Common myeloid progenitor, CD34-positive (primary cell): ENCODE measurements at regions of chr14 and their contacts with region 1.

Region 1: GRCh38 chr14:100192672-100193416 is 33.4 kb upstream of the DEGS2 start:
- DNase-seq: peak; percentile 98 to 99 (median 99)
- H3K4me3 ChIP-seq: peak overlapping the region in 6 of 7 experiments; percentile 25 to 70 (median 52)
- H3K27ac ChIP-seq: peak overlapping the region; percentile 54 to 77
- H3K4me1 ChIP-seq: peaks cover 0 to 18% (median 14%) of the 10 kb centered on the region in 4 experiments
- H3K27me3 ChIP-seq: no peaks in the 10 kb centered on the region

Region 2: GRCh38 chr14:100067971-100068959 is 124.6 kb before region 1 on chr14:
- CTCF ChIA-PET with region 1: interaction called, 25 read pairs
- POLR2A ChIA-PET with region 1: no interaction called
- DNase-seq: peak; percentile 93 to 99 (median 98)
- H3K4me3 ChIP-seq: peak overlapping the region in 5 of 7 experiments; percentile 9 to 64 (median 44)
- H3K27ac ChIP-seq: peak overlapping the region; percentile 82 to 92
- H3K4me1 ChIP-seq: peaks cover 50 to 100% (median 98%) of the 10 kb centered on the region in 4 experiments
- H3K27me3 ChIP-seq: no peaks in the 10 kb centered on the region

Region 3: DNA sequence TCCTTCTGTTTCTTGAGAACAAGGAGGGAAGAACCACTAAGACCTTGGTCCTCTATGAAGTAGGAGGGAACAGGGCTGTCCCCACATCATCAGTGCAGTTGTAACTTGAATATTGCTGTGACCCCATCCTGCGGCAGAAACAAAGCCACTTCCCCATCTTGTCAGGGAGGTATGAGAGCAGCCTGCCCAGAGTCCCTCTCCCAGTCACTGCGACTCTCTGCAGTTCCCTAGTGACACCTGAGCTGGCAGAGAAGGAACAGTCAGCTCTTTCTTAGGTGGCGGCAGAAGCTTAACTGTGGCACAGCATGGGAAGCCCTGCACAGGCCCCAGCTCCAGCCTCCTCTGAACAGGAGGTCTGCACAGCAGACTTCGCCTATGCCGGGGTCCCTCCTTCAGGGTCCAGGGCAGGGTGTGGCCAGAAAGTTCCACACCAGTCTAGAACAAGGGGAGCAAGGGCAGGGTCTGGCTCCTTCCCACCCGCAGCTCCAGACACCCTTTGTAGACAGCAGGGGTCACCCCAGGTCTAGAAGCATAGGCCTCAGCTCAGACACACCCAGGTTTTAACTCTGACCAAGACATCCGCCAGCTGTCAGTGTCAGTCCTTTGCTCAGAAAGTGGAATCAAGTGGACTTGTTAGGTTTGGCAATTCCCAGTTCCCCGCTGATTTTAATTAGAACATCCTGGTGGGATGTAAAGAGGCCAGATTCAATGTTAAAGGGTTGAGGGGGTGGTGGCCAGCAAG is 70.2 kb before region 1 on chr14:
- CTCF ChIA-PET with region 1: interaction called, 61 read pairs
- POLR2A ChIA-PET with region 1: no interaction called
- DNase-seq: peak in 2 of 3 donors; percentile 30 to 35
- H3K4me3 ChIP-seq: no peak overlapping the region
- H3K27ac ChIP-seq: no peak overlapping the region
- H3K4me1 ChIP-seq: peaks cover 0 to 7% (median 2%) of the 10 kb centered on the region in 4 experiments
- H3K27me3 ChIP-seq: no peaks in the 10 kb centered on the region

Region 4: GRCh38 chr14:100147181-100147631 is 45.6 kb before region 1 on chr14:
- CTCF ChIA-PET with region 1: interaction called, 39 read pairs
- POLR2A ChIA-PET with region 1: interaction called, 8 read pairs
- DNase-seq: peak; percentile 42 to 83 (median 82)
- H3K4me3 ChIP-seq: peak overlapping the region in 2 of 7 experiments; percentile 32 to 58
- H3K27ac ChIP-seq: no peak overlapping the region
- H3K4me1 ChIP-seq: peaks cover 0 to 35% (median 32%) of the 10 kb centered on the region in 4 experiments
- H3K27me3 ChIP-seq: no peaks in the 10 kb centered on the region

Region 5: DNA sequence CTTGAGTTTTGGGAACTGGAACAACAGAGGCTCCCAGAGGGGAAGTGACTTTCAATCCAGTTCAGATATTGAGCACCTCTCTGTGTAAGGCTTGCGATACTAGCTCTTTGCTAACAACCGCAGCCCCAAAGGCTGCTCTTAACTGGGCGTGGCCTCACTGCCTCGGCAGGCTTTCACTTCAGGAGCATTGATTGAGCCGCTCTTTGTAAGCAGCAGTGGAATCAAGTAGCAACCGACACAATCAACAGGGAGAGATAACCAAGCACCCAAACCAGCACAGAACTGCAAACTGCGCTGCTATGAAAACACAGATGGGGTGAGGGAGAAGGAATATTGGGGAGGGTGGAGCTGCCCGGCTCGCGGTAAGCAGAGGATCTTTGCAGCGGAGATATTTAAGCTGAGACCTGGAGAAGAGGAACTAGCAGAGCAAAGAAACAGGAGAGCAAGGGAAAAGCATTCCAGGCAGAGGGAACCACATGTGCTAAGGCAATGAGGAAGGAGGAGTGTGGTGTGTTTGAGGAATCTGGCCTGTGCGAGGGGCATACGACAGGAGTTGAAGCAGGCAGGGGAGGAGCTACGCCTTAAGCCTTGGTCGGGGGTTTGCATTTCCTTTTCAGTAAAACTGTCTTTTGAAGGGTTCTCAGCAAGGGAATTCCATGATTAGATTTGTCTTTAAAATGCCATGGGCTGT is 28.8 kb after region 1 on chr14:
- CTCF ChIA-PET with region 1: interaction called, 20 read pairs
- POLR2A ChIA-PET with region 1: interaction called, 3 read pairs
- DNase-seq: peak; percentile 52 to 82 (median 76)
- H3K4me3 ChIP-seq: peak overlapping the region; percentile 48 to 87 (median 70)
- H3K27ac ChIP-seq: peak overlapping the region in 1 of 2 experiments; percentile 68
- H3K4me1 ChIP-seq: peaks cover 24 to 46% (median 43%) of the 10 kb centered on the region in 4 experiments
- H3K27me3 ChIP-seq: no peaks in the 10 kb centered on the region

Region 6: GRCh38 chr14:100278702-100279101 is 85.9 kb after region 1 on chr14:
- CTCF ChIA-PET with region 1: no interaction called
- POLR2A ChIA-PET with region 1: no interaction called
- DNase-seq: peak; percentile 45 to 87 (median 81)
- H3K4me3 ChIP-seq: no peak overlapping the region
- H3K27ac ChIP-seq: no peak overlapping the region
- H3K4me1 ChIP-seq: peaks cover 7 to 30% (median 25%) of the 10 kb centered on the region in 4 experiments
- H3K27me3 ChIP-seq: no peaks in the 10 kb centered on the region

Region 7: GRCh38 chr14:100406505-100407131 is 213.8 kb after region 1 on chr14:
- CTCF ChIA-PET with region 1: no interaction called
- POLR2A ChIA-PET with region 1: no interaction called
- DNase-seq: peak in 2 of 3 donors; percentile 39 to 58
- H3K4me3 ChIP-seq: no peak overlapping the region
- H3K27ac ChIP-seq: no peak overlapping the region
- H3K4me1 ChIP-seq: peaks cover 6 to 23% (median 20%) of the 10 kb centered on the region in 4 experiments
- H3K27me3 ChIP-seq: peaks cover 0 to 2% (median 0%) of the 10 kb centered on the region in 5 experiments

Region 8: GRCh38 chr14:100692859-100693558 is 500.2 kb after region 1 on chr14:
- CTCF ChIA-PET with region 1: no interaction called
- POLR2A ChIA-PET with region 1: no interaction called
- DNase-seq: peak in 1 of 3 donors; percentile 49
- H3K4me3 ChIP-seq: no peak overlapping the region
- H3K27ac ChIP-seq: no peak overlapping the region
- H3K4me1 ChIP-seq: peaks cover 0 to 28% (median 1%) of the 10 kb centered on the region in 4 experiments
- H3K27me3 ChIP-seq: no peaks in the 10 kb centered on the region